ENCODE measurements at regions of chr10 and their contacts with region 1.

Region 1: GRCh38 chr10:49761789-49762565 is at the start of gene OGDHL:
- DNase-seq: peak; percentile 90
- H3K4me3 Mint-ChIP-seq: peak within 1 kb of the TSS; percentile 19
- H3K27ac Mint-ChIP-seq: no peak within 1 kb of the TSS
- H3K4me1 Mint-ChIP-seq: peaks cover 2% of the 10 kb centered on the region
- H3K27me3 Mint-ChIP-seq: peaks cover 21% of the 10 kb centered on the region
- total RNA-seq, gene OGDHL: 0.89 and 0.97 TPM in 2 replicates

Region 2: DNA sequence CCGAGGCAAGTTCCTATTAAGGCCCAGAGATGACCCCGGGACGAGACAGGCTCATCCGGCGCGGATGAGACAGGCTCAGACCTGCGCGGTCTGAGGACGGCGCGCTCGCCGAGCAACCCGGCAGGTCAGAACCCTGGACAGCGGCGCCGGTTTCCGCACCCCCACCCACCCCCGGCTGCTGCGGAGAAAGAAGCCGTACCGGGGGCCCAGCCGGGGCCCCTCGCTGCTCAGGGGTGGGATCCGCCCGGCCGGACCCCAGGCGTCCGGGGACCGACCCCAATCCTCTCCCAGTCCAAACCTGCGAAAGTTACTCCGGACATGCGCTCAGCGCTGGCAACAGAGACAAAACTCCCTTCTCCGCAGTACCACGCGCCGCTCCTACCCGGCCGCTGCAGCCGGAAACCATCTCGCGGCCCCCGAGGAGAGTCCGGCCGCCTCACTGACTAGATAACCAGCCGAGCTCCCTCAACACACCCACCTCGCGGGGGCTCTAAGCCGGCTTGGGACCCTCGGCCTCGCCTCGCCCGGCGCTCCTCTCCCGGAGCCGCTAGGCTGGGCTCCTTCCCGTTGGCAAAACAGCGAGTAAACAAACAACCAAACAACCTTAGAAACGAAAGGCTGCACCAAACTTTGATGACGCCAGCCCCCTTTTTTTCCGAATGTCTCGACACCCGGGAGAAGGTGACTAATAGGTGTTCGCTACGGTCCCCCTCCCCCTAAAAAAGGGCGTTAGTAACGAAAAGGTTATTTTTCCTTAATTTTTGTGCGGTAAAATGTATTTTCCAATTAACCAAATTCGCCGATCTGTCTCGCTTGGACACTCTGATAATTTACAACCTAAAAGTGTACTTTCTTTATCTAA is 363.7 kb before region 1 on chr10:
- intact Hi-C with region 1: loop called (anchors 10 kb)
- DNase-seq: peak; percentile 87
- H3K4me3 Mint-ChIP-seq: peak overlapping the region; percentile 2
- H3K27ac Mint-ChIP-seq: no peak overlapping the region
- H3K4me1 Mint-ChIP-seq: peaks cover 2% of the 10 kb centered on the region
- H3K27me3 Mint-ChIP-seq: peaks cover 68% of the 10 kb centered on the region

Region 3: DNA sequence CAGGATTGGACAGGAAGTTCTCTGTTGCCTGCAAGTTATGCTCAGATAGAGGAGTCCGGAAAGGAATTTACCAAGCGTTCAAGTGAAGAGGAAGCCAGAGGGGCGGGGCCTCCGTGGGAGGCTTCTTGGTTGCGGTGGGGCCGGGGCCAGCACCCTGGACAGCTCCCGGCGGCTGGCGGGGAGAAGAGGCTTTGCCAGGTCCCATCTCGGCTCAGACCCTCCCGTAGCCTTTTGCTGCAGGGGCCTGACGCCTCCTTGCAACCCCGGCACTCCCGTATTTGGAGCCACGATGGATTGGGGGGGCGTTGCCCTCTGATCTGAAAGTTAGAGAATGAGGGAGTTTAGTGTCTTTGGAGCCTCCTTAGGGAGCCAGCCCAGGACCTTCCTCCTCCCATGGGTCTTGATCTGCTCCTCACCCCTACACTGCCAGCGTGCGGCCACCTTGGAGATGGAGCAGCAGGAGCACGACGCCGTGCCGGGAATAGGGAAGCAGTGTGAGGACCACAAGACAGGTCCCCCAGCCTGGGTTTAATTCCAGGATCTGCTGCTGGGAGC is 154.9 kb before region 1 on chr10:
- intact Hi-C with region 1: loop called (anchors 2 kb)
- DNase-seq: peak; percentile 95
- H3K4me3 Mint-ChIP-seq: no peak overlapping the region
- H3K27ac Mint-ChIP-seq: no peak overlapping the region
- H3K4me1 Mint-ChIP-seq: peaks cover 3% of the 10 kb centered on the region
- H3K27me3 Mint-ChIP-seq: peaks cover 42% of the 10 kb centered on the region

Region 4: DNA sequence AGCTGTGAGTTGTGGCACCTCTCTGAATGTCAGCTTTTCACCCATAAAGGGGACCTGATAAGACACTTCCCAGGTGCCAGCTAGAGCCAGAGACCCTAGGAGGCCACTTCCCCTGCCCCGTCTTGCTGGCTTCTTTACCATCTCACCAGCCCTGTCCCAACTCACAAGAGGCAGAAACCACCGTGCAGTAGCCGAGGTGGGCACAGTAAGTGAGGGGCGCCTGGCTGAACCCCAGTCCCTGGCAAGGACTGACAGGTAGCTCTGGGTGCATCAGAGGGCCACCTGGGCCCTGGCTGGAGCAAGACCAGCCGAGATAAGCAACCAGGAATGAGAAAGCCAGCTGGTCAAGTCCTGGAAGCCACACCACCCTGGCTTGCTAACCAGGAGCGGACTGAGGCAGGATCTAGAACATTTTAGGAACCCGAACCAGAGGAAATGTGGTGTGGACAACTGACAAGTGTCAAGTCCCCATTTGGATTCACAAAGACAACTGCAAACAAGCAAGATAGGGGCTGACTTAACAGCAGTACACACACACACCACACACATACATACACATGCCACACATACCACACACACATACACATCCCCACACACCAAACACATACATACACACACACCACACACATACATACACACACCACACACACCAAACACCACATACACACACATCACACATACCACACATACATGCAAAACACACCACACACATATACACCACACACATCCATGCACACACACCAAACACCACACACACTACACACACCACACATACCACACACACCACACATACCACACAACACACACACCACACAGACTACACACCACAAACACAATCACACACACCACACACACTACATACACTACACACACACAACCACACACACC is 20.6 kb before region 1 on chr10:
- intact Hi-C with region 1: no loop called
- DNase-seq: peak; percentile 53
- H3K4me3 Mint-ChIP-seq: no peak overlapping the region
- H3K27ac Mint-ChIP-seq: no peak overlapping the region
- H3K4me1 Mint-ChIP-seq: no peaks in the 10 kb centered on the region
- H3K27me3 Mint-ChIP-seq: no peaks in the 10 kb centered on the region

Measured in activated CD4-positive, alpha-beta T cell treated with anti-CD3 and anti-CD28 coated beads, Interleukin-2, amount 10 ng/mL, durations not matched to agents 24 days and 14 days (primary cell).